GM10248 (cell line): ENCODE measurements at regions of chr5 and their contacts with region 1.

Region 1: GRCh38 chr5:106127341-106127781 is 1543.4 kb downstream of the EFNA5 start:
- DNase-seq: no peak
- CTCF ChIP-seq: no peak

Region 2: DNA sequence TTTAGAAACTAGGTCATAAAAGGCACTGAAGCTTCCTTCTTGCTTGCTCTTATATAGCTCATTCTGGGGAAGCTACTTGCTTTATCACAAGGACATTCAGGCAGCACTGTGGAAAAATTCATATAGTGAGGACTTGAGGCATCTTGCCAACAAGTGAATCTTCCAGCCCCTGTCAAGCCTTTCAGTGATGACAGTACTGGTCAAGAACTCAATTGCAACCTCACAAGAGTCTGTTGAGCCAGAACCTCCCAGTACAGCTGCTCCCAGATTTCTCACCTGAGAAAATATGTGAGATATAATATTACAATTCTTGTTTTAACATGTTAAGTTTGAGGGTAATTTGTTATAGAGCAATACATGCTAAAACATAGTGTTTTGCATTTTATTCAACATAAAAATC is 553.8 kb before region 1 on chr5:
- CTCF ChIA-PET with region 1: no interaction called
- POLR2A ChIA-PET with region 1: no interaction called
- DNase-seq: no peak
- CTCF ChIP-seq: no peak

Region 3: GRCh38 chr5:106116689-106117088 is 10.7 kb before region 1 on chr5:
- CTCF ChIA-PET with region 1: interaction called, 11 read pairs
- POLR2A ChIA-PET with region 1: no interaction called
- DNase-seq: no peak
- CTCF ChIP-seq: no peak

Region 4: GRCh38 chr5:106171708-106172107 is 44.3 kb after region 1 on chr5:
- CTCF ChIA-PET with region 1: no interaction called
- POLR2A ChIA-PET with region 1: no interaction called
- DNase-seq: no peak
- CTCF ChIP-seq: no peak

Region 5: GRCh38 chr5:106292654-106293053 is 165.3 kb after region 1 on chr5:
- CTCF ChIA-PET with region 1: no interaction called
- POLR2A ChIA-PET with region 1: no interaction called
- DNase-seq: no peak
- CTCF ChIP-seq: no peak